PC-9 (cell line): ENCODE measurements at regions of chr10 and their contacts with region 1.

Region 1: GRCh38 chr10:116888380-116889055 is 39.2 kb downstream of the ENO4 start:
- DNase-seq: peak; percentile 63 to 83
- H3K4me3 ChIP-seq: peak overlapping the region; percentile 31; the same call in 1 of the 2 replicates
- H3K27ac ChIP-seq: peak overlapping the region; percentile 59
- H3K4me1 ChIP-seq: peaks cover 25% of the 10 kb centered on the region
- H3K27me3 ChIP-seq: no peaks in the 10 kb centered on the region
- CTCF ChIP-seq: no peak

Region 2: GRCh38 chr10:116654816-116655215 is 233.7 kb before region 1 on chr10:
- CTCF ChIA-PET with region 1: no interaction called
- POLR2A ChIA-PET with region 1: no interaction called
- intact Hi-C with region 1: no loop called
- DNase-seq: no peak
- H3K4me3 ChIP-seq: no peak overlapping the region
- H3K27ac ChIP-seq: no peak overlapping the region
- H3K4me1 ChIP-seq: no peaks in the 10 kb centered on the region
- H3K27me3 ChIP-seq: peaks cover 41% of the 10 kb centered on the region; the same call in 1 of the 2 replicates
- CTCF ChIP-seq: peak; percentile 42; the same call in 1 of the 2 replicates

Region 3: GRCh38 chr10:116809483-116810119 is 78.9 kb before region 1 on chr10:
- CTCF ChIA-PET with region 1: no interaction called
- POLR2A ChIA-PET with region 1: interaction called, 8 read pairs
- intact Hi-C with region 1: loop called (anchors 10 kb)
- DNase-seq: peak in 1 of 2 experiments; percentile 37
- H3K4me3 ChIP-seq: peak overlapping the region; percentile 27; the same call in 1 of the 2 replicates
- H3K27ac ChIP-seq: no peak overlapping the region
- H3K4me1 ChIP-seq: no peaks in the 10 kb centered on the region
- H3K27me3 ChIP-seq: peaks cover 26% of the 10 kb centered on the region
- CTCF ChIP-seq: peak; percentile 64

Region 4: GRCh38 chr10:116849248-116850057 is 39.1 kb before region 1 on chr10 and contains the start of gene ENO4:
- CTCF ChIA-PET with region 1: no interaction called
- POLR2A ChIA-PET with region 1: no interaction called
- intact Hi-C with region 1: loop called (anchors 2 kb)
- DNase-seq: peak; percentile 72 to 81
- H3K4me3 ChIP-seq: peak within 1 kb of the TSS; percentile 67
- H3K27ac ChIP-seq: no peak within 1 kb of the TSS
- H3K4me1 ChIP-seq: peaks cover 17% of the 10 kb centered on the region
- H3K27me3 ChIP-seq: no peaks in the 10 kb centered on the region
- CTCF ChIP-seq: no peak
- total RNA-seq, gene ENO4: 0.43 and 0.79 TPM in 2 replicates

Region 5: GRCh38 chr10:116990262-116990800 is 101.8 kb after region 1 on chr10:
- CTCF ChIA-PET with region 1: no interaction called
- POLR2A ChIA-PET with region 1: interaction called, 49 read pairs
- intact Hi-C with region 1: no loop called
- DNase-seq: no peak
- H3K4me3 ChIP-seq: no peak overlapping the region
- H3K27ac ChIP-seq: no peak overlapping the region
- H3K4me1 ChIP-seq: no peaks in the 10 kb centered on the region
- H3K27me3 ChIP-seq: no peaks in the 10 kb centered on the region
- CTCF ChIP-seq: no peak

Region 6: DNA sequence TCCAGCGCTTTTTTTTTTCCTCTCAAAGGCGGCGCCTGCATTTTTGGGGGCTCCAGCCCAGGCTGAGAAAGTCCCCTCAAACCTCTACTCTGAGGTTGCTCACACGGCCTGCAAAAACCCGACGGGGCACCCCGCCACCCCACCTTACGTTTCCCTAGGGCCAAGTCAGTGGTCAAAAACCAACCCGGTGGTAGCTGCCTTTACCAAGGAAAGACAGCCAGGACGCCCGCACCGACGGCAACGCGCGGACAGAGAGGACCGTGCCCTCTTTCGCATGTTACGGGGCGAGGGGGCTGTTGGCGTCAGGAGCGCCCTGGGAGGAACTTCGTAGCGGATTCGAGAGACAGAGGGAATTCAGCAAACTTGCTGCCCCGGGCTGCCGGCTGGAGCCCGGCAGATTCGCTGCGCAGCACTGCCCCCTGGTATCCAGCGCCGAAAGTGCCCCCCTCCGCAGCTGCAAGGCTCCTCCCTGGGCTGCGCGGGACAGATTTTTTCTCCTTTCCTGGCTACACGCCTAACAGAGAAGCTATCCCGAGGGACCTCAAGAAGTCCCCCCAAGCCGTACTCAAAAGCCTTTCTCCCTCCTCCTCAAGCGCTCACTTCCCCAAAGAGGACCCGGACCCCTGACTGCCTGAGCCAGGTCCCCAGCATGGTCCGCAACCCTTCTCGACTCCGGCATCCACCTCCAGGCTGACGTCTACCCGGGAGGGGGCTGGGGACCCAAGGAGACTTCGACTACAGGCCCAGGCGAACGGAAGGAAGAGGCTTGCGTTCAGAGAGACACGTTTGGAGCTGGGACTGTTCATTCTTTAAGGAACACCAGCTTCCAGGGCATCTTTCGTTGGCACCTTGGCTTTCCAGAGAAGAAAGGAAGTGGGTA is 277.3 kb after region 1 on chr10:
- CTCF ChIA-PET with region 1: no interaction called
- POLR2A ChIA-PET with region 1: no interaction called
- intact Hi-C with region 1: no loop called
- DNase-seq: peak in 1 of 2 experiments; percentile 53
- H3K4me3 ChIP-seq: no peak overlapping the region
- H3K27ac ChIP-seq: no peak overlapping the region
- H3K4me1 ChIP-seq: no peaks in the 10 kb centered on the region
- H3K27me3 ChIP-seq: peaks cover 14% of the 10 kb centered on the region; the same call in 1 of the 2 replicates
- CTCF ChIP-seq: peak; percentile 59

Region 7: DNA sequence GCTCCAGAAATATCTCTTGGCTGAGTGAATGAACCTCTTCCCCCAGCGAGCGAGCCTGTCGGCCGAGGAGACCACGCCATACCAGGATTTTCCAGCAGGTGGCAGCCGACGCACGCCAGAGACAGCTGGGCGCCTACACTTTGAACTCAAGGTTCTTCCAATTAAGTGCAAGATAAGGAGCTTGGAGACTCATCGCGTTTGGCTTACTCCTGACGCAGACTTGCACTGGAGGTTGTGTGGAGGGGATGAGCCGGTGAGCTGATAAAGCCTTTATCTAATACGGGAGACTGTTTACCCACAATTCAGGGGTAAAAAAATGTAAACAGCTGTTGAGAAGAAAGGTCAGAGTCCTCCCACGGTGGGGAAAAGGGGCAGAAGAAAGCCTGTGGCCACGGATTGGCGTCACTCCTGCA is 608.1 kb after region 1 on chr10:
- CTCF ChIA-PET with region 1: no interaction called
- POLR2A ChIA-PET with region 1: no interaction called
- intact Hi-C with region 1: no loop called
- DNase-seq: peak; percentile 57 to 58
- H3K4me3 ChIP-seq: no peak overlapping the region
- H3K27ac ChIP-seq: no peak overlapping the region
- H3K4me1 ChIP-seq: no peaks in the 10 kb centered on the region
- H3K27me3 ChIP-seq: peaks cover 11% of the 10 kb centered on the region
- CTCF ChIP-seq: peak; percentile 86